HEK293 (cell line): ENCODE measurements at regions of chr21 and their contacts with region 1.

Region 1: DNA sequence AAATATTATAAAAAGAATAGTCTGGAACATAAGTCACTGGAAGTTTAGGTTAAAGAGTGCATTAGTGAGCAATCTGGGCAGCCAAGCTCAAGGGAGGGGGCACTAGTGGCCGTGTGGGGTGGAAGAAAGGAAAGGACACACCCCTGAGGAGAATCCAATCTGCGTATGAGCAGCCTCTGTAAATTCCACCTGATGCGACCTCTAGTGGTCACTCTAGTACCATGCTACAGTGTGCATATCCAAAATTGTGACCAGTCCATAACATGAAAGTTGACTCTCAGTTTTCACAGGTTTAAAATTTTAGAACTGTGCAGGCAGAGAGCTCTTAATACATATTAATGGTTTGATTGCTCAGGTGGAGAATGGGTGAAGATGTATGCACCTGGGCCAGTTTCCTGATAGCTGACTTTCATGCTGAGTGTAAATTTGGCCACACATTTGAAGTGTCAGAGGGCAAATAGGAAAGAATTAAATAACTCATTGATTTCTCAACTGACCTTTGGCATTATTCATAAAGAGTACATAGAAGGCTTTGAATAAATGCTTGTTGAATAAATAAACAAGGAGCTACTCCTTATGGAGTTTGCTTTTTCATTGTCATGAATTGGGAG is 105.9 kb upstream of the C21orf91 start:
- H3K4me3 ChIP-seq: no peak overlapping the region
- H3K27ac ChIP-seq: no peak overlapping the region
- H3K4me1 ChIP-seq: no peaks in the 10 kb centered on the region
- CTCF ChIP-seq: no peak

Region 2: GRCh38 chr21:17688912-17689874 is 235.9 kb before region 1 on chr21:
- CTCF ChIA-PET with region 1: interaction called, 21 read pairs
- POLR2A ChIA-PET with region 1: no interaction called
- H3K4me3 ChIP-seq: peak overlapping the region; percentile 18; the same call in 1 of the 2 replicates
- H3K27ac ChIP-seq: peak overlapping the region; percentile 12; the same call in 1 of the 2 replicates
- H3K4me1 ChIP-seq: no peaks in the 10 kb centered on the region
- CTCF ChIP-seq: no peak

Region 3: DNA sequence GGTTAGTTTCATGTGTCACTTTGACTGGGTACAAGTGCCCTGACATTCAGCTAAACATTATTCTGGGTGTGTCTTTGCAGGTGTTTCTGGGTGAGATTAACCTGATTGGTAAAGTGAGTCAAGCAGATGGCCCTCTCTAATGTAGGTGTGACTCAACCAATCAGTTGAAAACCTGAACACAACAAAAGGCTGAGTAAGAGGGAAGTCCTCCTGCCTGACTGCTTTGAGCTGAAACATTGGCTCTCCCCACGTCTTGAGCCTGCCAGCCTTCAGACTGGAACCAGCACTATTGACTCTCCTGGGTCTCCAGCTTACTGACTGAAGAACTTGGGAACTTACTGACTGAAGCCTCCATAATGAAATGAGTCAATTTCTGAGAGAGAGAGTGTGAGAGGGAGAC is 35.9 kb before region 1 on chr21:
- CTCF ChIA-PET with region 1: interaction called, 17 read pairs
- POLR2A ChIA-PET with region 1: no interaction called
- H3K4me3 ChIP-seq: no peak overlapping the region
- H3K27ac ChIP-seq: no peak overlapping the region
- H3K4me1 ChIP-seq: no peaks in the 10 kb centered on the region
- CTCF ChIP-seq: no peak

Region 4: DNA sequence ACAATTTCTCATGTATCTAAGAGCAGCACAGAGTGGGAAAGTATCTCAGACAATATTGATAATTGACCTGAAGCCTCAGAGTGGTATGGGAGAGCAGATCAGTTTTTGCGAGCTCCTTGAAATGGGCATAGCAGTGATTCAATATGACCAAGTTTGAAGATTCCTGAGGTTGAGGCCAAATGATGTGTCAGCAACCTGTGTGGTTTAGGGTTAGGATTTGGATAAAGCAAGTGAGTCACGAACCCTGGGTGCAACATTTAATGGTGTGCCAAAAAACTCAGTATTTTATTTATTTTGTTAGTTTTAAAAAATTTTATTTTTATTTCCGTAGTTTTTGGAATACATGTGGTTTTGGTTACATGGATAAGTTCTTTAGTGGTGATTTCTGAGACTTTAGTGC is 13.5 kb before region 1 on chr21:
- CTCF ChIA-PET with region 1: interaction called, 27 read pairs
- POLR2A ChIA-PET with region 1: no interaction called
- H3K4me3 ChIP-seq: no peak overlapping the region
- H3K27ac ChIP-seq: no peak overlapping the region
- H3K4me1 ChIP-seq: no peaks in the 10 kb centered on the region
- CTCF ChIP-seq: no peak

Region 5: DNA sequence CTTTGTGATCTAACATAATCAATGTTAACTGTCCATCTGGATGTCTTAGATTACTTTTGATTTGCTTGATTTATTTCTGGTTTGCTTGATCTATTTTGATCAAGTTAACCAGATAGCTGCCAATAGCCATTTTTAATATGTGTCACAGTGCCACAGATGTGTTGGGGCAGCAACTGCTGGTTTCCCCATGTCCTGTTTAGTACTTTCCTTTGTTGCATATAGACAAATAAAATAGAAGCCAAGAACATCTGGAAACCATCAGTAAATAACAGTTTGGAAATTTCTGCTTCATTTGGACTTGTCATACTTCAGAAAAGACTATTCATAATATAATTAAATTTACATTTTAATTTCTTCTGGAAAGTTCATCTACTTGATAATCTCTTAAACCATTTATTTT is 39.6 kb after region 1 on chr21:
- CTCF ChIA-PET with region 1: interaction called, 10 read pairs
- POLR2A ChIA-PET with region 1: no interaction called
- H3K4me3 ChIP-seq: no peak overlapping the region
- H3K27ac ChIP-seq: no peak overlapping the region
- H3K4me1 ChIP-seq: no peaks in the 10 kb centered on the region
- CTCF ChIP-seq: no peak